ENCODE measurements at regions of chr9 and their contacts with region 1.

Region 1: DNA sequence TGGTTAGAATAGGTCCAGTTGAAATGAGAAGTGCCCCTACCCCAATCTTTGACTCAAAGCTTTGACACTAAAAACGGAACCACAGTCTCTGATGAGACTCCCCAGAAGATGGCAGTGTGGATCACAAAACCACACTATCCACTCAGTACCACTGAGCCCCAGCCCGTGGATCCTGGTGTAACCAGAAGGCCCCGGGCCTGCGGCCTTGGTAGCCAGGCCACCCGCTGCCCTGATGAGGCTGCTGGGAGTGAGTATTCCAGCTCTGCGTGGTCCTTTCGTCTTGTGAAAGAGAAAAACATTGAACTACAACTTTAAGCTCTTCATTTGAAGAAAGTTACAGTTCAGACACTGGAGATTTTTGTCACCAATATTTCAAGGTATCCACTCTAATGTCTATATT is 42.2 kb upstream of the FBP1 start:
- DNase-seq: peak; percentile 85 to 91 (median 88)
- ATAC-seq: peak; percentile 96 to 97
- H3K4me3 ChIP-seq: no peak overlapping the region
- H3K27ac ChIP-seq: no peak overlapping the region
- H3K4me1 ChIP-seq: no peaks in the 10 kb centered on the region
- H3K27me3 ChIP-seq: no peaks in the 10 kb centered on the region

Region 2: GRCh38 chr9:94767331-94768072 is 86.0 kb after region 1 on chr9:
- intact Hi-C with region 1: loop called in 1 of 4 experiments (anchors 10 kb)
- DNase-seq: no peak
- ATAC-seq: no peak
- H3K4me3 ChIP-seq: no peak overlapping the region
- H3K27ac ChIP-seq: no peak overlapping the region
- H3K4me1 ChIP-seq: no peaks in the 10 kb centered on the region
- H3K27me3 ChIP-seq: no peaks in the 10 kb centered on the region